Vagina (tissue), 2 donors: ENCODE measurements at regions of chrX and their contacts with region 1.

Region 1: GRCh38 chrX:101230636-101231035 is 11.1 kb downstream of the DRP2 start:
- DNase-seq: no peak
- H3K4me3 ChIP-seq: no peak overlapping the region
- H3K27ac ChIP-seq: no peak overlapping the region
- H3K4me1 ChIP-seq: no peaks in the 10 kb centered on the region
- H3K27me3 ChIP-seq: no peaks in the 10 kb centered on the region
- CTCF ChIP-seq: no peak
- POLR2A ChIP-seq: no peak

Region 2: DNA sequence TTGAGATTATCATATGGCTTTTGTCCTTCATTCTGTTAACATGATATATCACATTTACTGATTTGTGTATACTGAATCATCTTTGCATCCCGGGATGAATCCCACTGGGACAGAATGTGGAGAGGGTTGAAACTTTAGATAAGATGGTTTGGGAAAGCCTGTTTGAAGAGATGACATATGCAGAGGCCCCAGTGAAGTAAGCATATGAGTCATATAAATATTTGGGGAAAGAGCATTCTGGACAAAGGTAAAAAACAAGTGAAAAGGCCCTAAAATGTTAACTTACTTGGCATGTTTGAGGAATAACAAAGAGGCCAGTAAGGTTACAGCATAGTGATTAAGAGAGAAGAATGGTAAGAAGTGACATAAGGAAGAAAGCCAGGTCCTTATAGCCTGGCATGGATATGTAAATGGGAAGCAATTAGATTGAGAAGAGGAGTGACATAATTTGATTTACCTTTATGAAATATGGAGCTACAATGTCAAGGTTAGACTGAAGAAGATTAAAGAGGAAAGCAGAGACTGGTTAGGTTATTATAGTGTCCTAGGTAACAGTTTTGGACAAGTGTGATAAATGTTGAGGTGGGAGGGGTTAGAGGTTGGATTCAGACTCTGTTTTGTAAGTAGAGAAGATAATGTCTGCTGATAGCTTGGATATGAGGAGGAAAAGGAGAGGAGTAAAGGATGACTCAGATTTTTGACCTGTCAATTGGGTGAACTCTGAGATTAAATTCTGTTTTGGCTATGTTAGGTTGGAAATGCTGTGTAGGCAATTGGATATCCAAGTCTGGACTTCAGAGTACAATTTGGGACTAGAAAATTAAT is 65.7 kb before region 1 on chrX:
- intact Hi-C with region 1: loop called (anchors 10 kb)
- DNase-seq: no peak
- H3K4me3 ChIP-seq: no peak overlapping the region
- H3K27ac ChIP-seq: no peak overlapping the region
- H3K4me1 ChIP-seq: no peaks in the 10 kb centered on the region
- H3K27me3 ChIP-seq: no peaks in the 10 kb centered on the region
- CTCF ChIP-seq: no peak
- POLR2A ChIP-seq: no peak